ENCODE measurements at regions of chr16 and their contacts with region 1.

Region 1: DNA sequence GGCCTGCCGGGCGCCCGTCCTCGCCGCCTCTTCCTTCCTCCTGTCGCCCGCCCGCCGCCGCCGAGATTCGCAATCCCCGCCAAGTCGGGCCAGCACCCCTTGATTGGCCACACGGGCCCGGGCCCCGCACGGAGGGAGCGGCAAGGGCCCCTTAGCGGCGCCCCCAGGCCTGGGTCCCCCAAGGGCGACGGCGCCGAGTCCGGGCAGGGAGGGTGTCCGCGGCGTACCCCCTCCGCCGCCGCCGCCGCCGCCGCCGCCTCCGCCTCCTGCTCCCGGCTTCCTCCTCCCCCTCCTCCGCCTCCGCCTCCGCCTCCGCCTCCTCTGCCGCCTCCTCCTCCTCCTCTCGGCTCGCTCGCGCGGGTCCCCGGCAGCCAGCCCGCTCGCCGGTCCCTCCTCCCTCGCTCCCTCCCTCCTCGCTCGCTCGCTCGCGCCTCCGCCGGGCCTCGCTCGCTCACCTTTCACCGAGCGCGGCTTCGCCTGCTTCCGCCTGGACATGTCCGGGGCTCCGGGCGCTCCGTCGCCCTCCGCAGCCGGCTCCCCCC is 561 bp downstream of the ZNF423 start:
- DNase-seq: peak; percentile 89
- ATAC-seq: peak; percentile 59 to 69
- H3K4me3 ChIP-seq: peak overlapping the region; percentile 71 to 96 (median 84)
- H3K27ac ChIP-seq: peak overlapping the region; percentile 92 to 98 (median 94)
- H3K4me1 ChIP-seq: peaks cover 39 to 50% of the 10 kb centered on the region in 2 donors
- H3K27me3 ChIP-seq: no peaks in the 10 kb centered on the region
- CTCF ChIP-seq: no peak
- POLR2A ChIP-seq: peak; percentile 90 to 96

Region 2: DNA sequence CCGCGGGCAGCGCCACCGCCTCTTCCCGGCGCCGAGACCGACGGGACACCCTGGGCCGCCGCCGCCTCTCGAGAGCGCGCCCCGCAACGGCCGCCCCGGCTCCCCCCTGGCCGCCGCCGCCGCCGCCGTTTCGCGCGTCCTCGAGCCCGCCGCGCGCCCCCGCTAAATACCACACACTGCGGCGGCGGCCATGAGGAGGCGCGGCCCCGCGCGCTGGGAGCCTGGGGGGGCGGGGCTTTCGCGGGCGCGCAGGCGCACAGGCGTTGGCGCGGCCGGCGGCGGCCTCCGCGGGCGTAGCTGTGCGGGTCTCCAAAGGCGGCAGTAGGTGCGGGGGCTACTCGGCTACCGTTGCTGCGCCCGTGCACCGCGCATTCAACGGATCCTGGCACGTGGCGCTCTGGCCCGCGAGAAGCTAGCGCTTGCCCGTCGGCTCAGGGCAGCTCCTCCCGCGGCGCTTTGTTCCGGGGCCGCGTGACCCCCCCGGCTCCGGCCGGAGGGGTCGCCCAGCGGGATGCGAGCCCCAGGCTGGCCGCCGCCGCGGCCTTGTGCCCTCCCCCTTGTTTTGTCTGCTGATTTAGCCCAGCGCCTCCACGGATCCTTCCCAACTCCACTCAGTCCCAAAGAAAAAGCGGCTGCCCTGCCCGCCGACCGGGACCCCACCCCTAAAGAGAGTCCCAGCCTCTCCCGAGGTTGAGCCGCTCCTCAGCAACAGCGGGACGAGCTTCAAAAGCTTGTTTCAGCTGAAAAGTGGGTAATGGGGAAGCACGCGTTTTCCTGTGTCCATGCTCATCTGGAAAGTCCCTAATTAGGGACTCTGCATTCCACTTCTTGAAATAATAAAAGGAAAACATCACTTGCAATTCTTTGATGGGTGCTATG is 1469.8 kb before region 1 on chr16 and contains the start of gene SIAH1:
- in situ Hi-C with region 1: no loop called
- intact Hi-C with region 1: loop called (anchors 10 kb)
- DNase-seq: peak; percentile 69 to 82
- ATAC-seq: peak; percentile 76 to 78
- H3K4me3 ChIP-seq: peak within 1 kb of the TSS; percentile 77 to 89 (median 79)
- H3K27ac ChIP-seq: peak within 1 kb of the TSS; percentile 94 to 99 (median 98)
- H3K4me1 ChIP-seq: peaks cover 28 to 36% of the 10 kb centered on the region in 2 donors
- H3K27me3 ChIP-seq: no peaks in the 10 kb centered on the region
- CTCF ChIP-seq: peak in 2 of 5 experiments; percentile 6 to 16
- POLR2A ChIP-seq: peak; percentile 96 to 97
- total RNA-seq, gene SIAH1: 19.9 to 21.0 (median 20.1) TPM

Region 3: GRCh38 chr16:49556606-49557446 is 298.5 kb before region 1 on chr16:
- in situ Hi-C with region 1: no loop called
- intact Hi-C with region 1: loop called (anchors 5 kb)
- DNase-seq: no peak
- ATAC-seq: peak in 1 of 2 donors; percentile 77
- H3K4me3 ChIP-seq: peak overlapping the region in 2 of 4 donors; percentile 24 to 25
- H3K27ac ChIP-seq: peak overlapping the region in 2 of 4 donors; percentile 55 to 73
- H3K4me1 ChIP-seq: peaks cover 25 to 40% of the 10 kb centered on the region in 2 donors
- H3K27me3 ChIP-seq: no peaks in the 10 kb centered on the region
- CTCF ChIP-seq: peak in 4 of 5 experiments; percentile 23 to 58 (median 48)
- POLR2A ChIP-seq: no peak

Region 4: GRCh38 chr16:49663081-49664065 is 192.0 kb before region 1 on chr16:
- in situ Hi-C with region 1: no loop called
- intact Hi-C with region 1: loop called (anchors 5 kb)
- DNase-seq: peak in 1 of 2 donors; percentile 31
- ATAC-seq: no peak
- H3K4me3 ChIP-seq: peak overlapping the region; percentile 12 to 26 (median 18)
- H3K27ac ChIP-seq: peak overlapping the region; percentile 47 to 75 (median 62)
- H3K4me1 ChIP-seq: peaks cover 35 to 36% of the 10 kb centered on the region in 2 donors
- H3K27me3 ChIP-seq: no peaks in the 10 kb centered on the region
- CTCF ChIP-seq: no peak
- POLR2A ChIP-seq: no peak

Region 5: GRCh38 chr16:49834531-49835151 is 20.7 kb before region 1 on chr16:
- in situ Hi-C with region 1: no loop called
- intact Hi-C with region 1: loop called (anchors 2 kb)
- DNase-seq: peak; percentile 88 to 96
- ATAC-seq: peak; percentile 64 to 70
- H3K4me3 ChIP-seq: peak overlapping the region; percentile 12 to 40 (median 26)
- H3K27ac ChIP-seq: peak overlapping the region; percentile 87 to 98 (median 96)
- H3K4me1 ChIP-seq: peaks cover 81 to 86% of the 10 kb centered on the region in 2 donors
- H3K27me3 ChIP-seq: no peaks in the 10 kb centered on the region
- CTCF ChIP-seq: no peak
- POLR2A ChIP-seq: peak; percentile 31 to 34

Region 6: DNA sequence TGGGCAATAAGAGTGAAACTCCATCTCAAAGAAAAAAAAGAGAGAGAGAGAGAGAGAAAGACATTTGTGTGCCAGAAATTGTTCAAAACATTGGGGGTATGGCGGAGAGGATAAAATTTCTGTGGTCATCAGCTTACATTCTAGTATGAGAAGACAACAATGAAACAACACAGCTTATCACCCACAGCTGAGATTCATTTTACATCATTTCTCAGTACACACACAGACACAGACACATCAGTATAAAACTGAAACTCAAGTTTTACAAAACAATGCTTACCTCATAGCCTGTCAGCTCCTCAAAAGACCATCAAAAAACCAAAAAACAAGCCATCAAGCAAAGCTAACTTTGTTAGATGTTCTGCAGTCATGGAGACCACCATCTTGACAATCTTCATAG is 138.2 kb after region 1 on chr16:
- in situ Hi-C with region 1: no loop called
- intact Hi-C with region 1: no loop called
- DNase-seq: no peak
- ATAC-seq: no peak
- H3K4me3 ChIP-seq: no peak overlapping the region
- H3K27ac ChIP-seq: no peak overlapping the region
- H3K4me1 ChIP-seq: no peaks in the 10 kb centered on the region
- H3K27me3 ChIP-seq: no peaks in the 10 kb centered on the region
- CTCF ChIP-seq: no peak
- POLR2A ChIP-seq: no peak

Region 7: GRCh38 chr16:50011707-50012106 is 156.4 kb after region 1 on chr16:
- in situ Hi-C with region 1: no loop called
- intact Hi-C with region 1: no loop called
- DNase-seq: no peak
- ATAC-seq: no peak
- H3K4me3 ChIP-seq: no peak overlapping the region
- H3K27ac ChIP-seq: no peak overlapping the region
- H3K4me1 ChIP-seq: no peaks in the 10 kb centered on the region
- H3K27me3 ChIP-seq: no peaks in the 10 kb centered on the region
- CTCF ChIP-seq: no peak
- POLR2A ChIP-seq: no peak

Measured in gastrocnemius medialis (tissue), 4 donors.